HCT116 (cell line): ENCODE measurements at regions of chr17 and their contacts with region 1.

Region 1: DNA sequence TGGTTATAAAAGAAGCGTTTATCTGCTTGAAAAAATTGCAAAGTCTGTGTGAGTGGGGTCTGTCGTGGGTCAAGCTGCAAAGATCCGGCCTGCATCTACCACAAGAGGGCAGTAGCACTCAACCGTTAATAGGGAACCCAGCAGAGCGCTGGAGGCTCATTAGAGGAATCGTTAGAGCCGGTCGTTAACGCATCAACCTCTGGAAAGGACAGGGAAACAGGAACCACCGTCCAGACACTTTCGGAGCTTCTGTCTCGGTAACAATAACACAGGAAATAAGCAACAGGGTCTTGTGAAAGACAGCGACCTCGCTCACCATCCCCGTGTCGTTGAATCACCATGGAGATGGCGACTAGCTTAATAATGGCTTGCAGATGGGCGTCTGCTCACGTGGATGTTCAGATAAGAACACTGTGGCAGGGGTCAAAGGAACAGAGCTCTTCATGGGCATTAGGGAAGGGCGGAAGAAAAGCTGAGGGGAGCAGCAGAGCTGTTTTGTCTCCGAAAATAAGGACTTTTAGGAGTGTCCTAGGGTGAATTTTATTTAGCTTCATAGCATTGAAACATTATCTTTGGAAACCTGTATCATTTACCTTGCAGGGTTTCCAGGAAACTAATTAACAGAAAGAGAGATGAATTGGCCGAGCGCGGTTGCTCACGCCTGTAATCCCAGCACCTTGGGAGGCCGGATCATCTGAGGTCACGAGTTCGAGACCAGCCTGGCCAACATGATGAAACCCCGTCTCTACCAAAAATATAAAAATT is 11.9 kb upstream of the NSRP1 start:
- DNase-seq: peak; percentile 76
- ATAC-seq: peak; percentile 99
- H3K4me3 ChIP-seq: peak overlapping the region; percentile 47 to 57
- H3K27ac ChIP-seq: no peak overlapping the region
- H3K4me1 ChIP-seq: peaks cover 3 to 7% of the 10 kb centered on the region in 2 experiments; a peak in 2 of 4 replicates
- H3K27me3 ChIP-seq: no peaks in the 10 kb centered on the region
- CTCF ChIP-seq: peak; percentile 88 to 96 (median 93); a peak in 5 of 6 replicates
- POLR2A ChIP-seq: no peak
- RAD21 ChIP-seq: peak; percentile 90

Region 2: DNA sequence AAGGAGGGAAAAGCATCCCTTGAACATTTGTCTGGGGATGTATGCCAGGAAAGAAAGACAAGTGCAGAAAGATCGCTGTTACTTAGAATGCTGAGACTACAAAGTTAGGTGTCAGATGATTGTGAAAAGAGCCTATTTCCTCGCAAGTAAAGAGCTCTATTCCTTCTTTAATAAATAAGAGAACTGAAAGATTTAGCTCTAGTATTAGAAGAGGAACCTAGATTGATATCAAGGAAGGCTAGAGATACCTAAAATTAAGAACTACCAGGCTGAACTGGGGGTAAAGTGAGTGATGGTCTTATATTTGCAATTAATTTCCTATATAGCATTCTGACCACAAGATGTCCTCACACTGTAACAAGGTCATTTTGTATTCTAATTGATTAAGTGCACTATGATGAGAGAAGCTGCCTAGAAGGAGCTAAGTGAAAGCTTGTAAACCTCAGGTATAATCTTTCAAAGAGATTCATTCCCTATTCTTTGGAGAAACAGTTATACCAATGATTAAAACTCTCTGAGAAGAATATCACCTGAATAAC is 237.0 kb before region 1 on chr17:
- CTCF ChIA-PET with region 1: no interaction called
- POLR2A ChIA-PET with region 1: no interaction called
- RAD21 ChIA-PET with region 1: no interaction called
- intact Hi-C with region 1: no loop called
- DNase-seq: no peak
- ATAC-seq: no peak
- H3K4me3 ChIP-seq: no peak overlapping the region
- H3K27ac ChIP-seq: no peak overlapping the region
- H3K4me1 ChIP-seq: no peaks in the 10 kb centered on the region
- H3K27me3 ChIP-seq: no peaks in the 10 kb centered on the region
- CTCF ChIP-seq: peak in 2 of 3 experiments; percentile 26 to 46; a peak in 2 of 6 replicates
- POLR2A ChIP-seq: no peak
- RAD21 ChIP-seq: peak; percentile 27; the same call in 1 of the 2 replicates

Region 3: GRCh38 chr17:30116661-30117551 is 12.1 kb after region 1 on chr17 and contains the start of gene NSRP1:
- CTCF ChIA-PET with region 1: interaction called, 11 read pairs
- POLR2A ChIA-PET with region 1: interaction called, 10 read pairs
- RAD21 ChIA-PET with region 1: no interaction called
- intact Hi-C with region 1: no loop called
- DNase-seq: peak; percentile 88
- ATAC-seq: peak; percentile 98
- H3K4me3 ChIP-seq: peak within 1 kb of the TSS; percentile 62 to 67
- H3K27ac ChIP-seq: peak within 1 kb of the TSS; percentile 83
- H3K4me1 ChIP-seq: peaks cover 7 to 10% of the 10 kb centered on the region in 2 experiments
- H3K27me3 ChIP-seq: no peaks in the 10 kb centered on the region
- CTCF ChIP-seq: no peak
- POLR2A ChIP-seq: peak; percentile 96
- RAD21 ChIP-seq: no peak
- total RNA-seq, gene NSRP1: 24.9 TPM

Region 4: GRCh38 chr17:30236766-30237165 is 132.0 kb after region 1 on chr17:
- CTCF ChIA-PET with region 1: interaction called, 30 read pairs
- POLR2A ChIA-PET with region 1: no interaction called
- RAD21 ChIA-PET with region 1: interaction called in 1 of 2 experiments, 3 read pairs
- intact Hi-C with region 1: loop called (anchors 1 kb)
- DNase-seq: peak; percentile 7
- ATAC-seq: peak; percentile 99
- H3K4me3 ChIP-seq: no peak overlapping the region
- H3K27ac ChIP-seq: no peak overlapping the region
- H3K4me1 ChIP-seq: peaks cover 0 to 3% of the 10 kb centered on the region in 2 experiments; a peak in 1 of 4 replicates
- H3K27me3 ChIP-seq: peaks cover 24% of the 10 kb centered on the region; the same call in 1 of the 2 replicates
- CTCF ChIP-seq: peak; percentile 49 to 59 (median 56); a peak in 5 of 6 replicates
- POLR2A ChIP-seq: no peak
- RAD21 ChIP-seq: peak; percentile 78

Region 5: GRCh38 chr17:30336369-30337171 is 231.8 kb after region 1 on chr17:
- CTCF ChIA-PET with region 1: interaction called, 67 read pairs
- POLR2A ChIA-PET with region 1: interaction called, 6 read pairs
- RAD21 ChIA-PET with region 1: interaction called, 15 to 16 read pairs
- intact Hi-C with region 1: loop called (anchors 1 kb)
- DNase-seq: peak; percentile 79
- ATAC-seq: peak; percentile 80
- H3K4me3 ChIP-seq: peak overlapping the region in 1 of 2 experiments; percentile 37; a peak in 1 of 4 replicates
- H3K27ac ChIP-seq: no peak overlapping the region
- H3K4me1 ChIP-seq: peaks cover 7 to 20% of the 10 kb centered on the region in 2 experiments; a peak in 3 of 4 replicates
- H3K27me3 ChIP-seq: no peaks in the 10 kb centered on the region
- CTCF ChIP-seq: peak; percentile 49 to 98 (median 89)
- POLR2A ChIP-seq: no peak
- RAD21 ChIP-seq: peak; percentile 81; the same call in 1 of the 2 replicates

Region 6: GRCh38 chr17:30716461-30717300 is 611.9 kb after region 1 on chr17:
- CTCF ChIA-PET with region 1: interaction called, 4 read pairs
- POLR2A ChIA-PET with region 1: no interaction called
- RAD21 ChIA-PET with region 1: no interaction called
- intact Hi-C with region 1: loop called (anchors 10 kb)
- DNase-seq: no peak
- ATAC-seq: no peak
- H3K4me3 ChIP-seq: no peak overlapping the region
- H3K27ac ChIP-seq: no peak overlapping the region
- H3K4me1 ChIP-seq: peaks cover 3 to 11% of the 10 kb centered on the region in 2 experiments; a peak in 2 of 4 replicates
- H3K27me3 ChIP-seq: no peaks in the 10 kb centered on the region
- CTCF ChIP-seq: peak in 2 of 3 experiments; percentile 34 to 44; a peak in 2 of 6 replicates
- POLR2A ChIP-seq: no peak
- RAD21 ChIP-seq: peak; percentile 32; the same call in 1 of the 2 replicates